GM12878 (cell line): ENCODE measurements at regions of chr16 and their contacts with region 1.

Region 1: GRCh38 chr16:48609652-48610029 is 339 bp downstream of the N4BP1 start:
- DNase-seq: no peak
- ATAC-seq: peak; percentile 46
- H3K4me3 ChIP-seq: peak overlapping the region; percentile 90
- H3K27ac ChIP-seq: peak overlapping the region; percentile 97
- H3K4me1 ChIP-seq: peaks cover 46% of the 10 kb centered on the region
- H3K27me3 ChIP-seq: no peaks in the 10 kb centered on the region
- CTCF ChIP-seq: no peak
- EP300 ChIP-seq: no peak
- POLR2A ChIP-seq: peak; percentile 75
- RAD21 ChIP-seq: no peak

Region 2: GRCh38 chr16:47475786-47476185 is 1133.9 kb before region 1 on chr16:
- CTCF ChIA-PET with region 1: no interaction called
- POLR2A ChIA-PET with region 1: interaction called, 10 read pairs
- RAD21 ChIA-PET with region 1: no interaction called
- SMC1A ChIA-PET with region 1: no interaction called
- in situ Hi-C with region 1: no loop called
- intact Hi-C with region 1: no loop called
- DNase-seq: no peak
- ATAC-seq: no peak
- H3K4me3 ChIP-seq: no peak overlapping the region
- H3K27ac ChIP-seq: no peak overlapping the region
- H3K4me1 ChIP-seq: peaks cover 10% of the 10 kb centered on the region
- H3K27me3 ChIP-seq: no peaks in the 10 kb centered on the region
- CTCF ChIP-seq: no peak
- EP300 ChIP-seq: no peak
- POLR2A ChIP-seq: no peak
- RAD21 ChIP-seq: no peak

Region 3: GRCh38 chr16:47779201-47780016 is 830.2 kb before region 1 on chr16:
- CTCF ChIA-PET with region 1: no interaction called
- POLR2A ChIA-PET with region 1: no interaction called
- RAD21 ChIA-PET with region 1: no interaction called
- SMC1A ChIA-PET with region 1: no interaction called
- in situ Hi-C with region 1: no loop called
- intact Hi-C with region 1: no loop called
- DNase-seq: peak; percentile 5
- ATAC-seq: peak; percentile 69
- H3K4me3 ChIP-seq: 0 out of 2 replicates have a peak overlapping the region, but pooled peaks have one; percentile 49
- H3K27ac ChIP-seq: peak overlapping the region; percentile 31; the same call in 1 of the 2 replicates
- H3K4me1 ChIP-seq: peaks cover 4% of the 10 kb centered on the region; the same call in 1 of the 2 replicates
- H3K27me3 ChIP-seq: no peaks in the 10 kb centered on the region
- CTCF ChIP-seq: no peak
- EP300 ChIP-seq: no peak
- POLR2A ChIP-seq: no peak
- RAD21 ChIP-seq: no peak

Region 4: DNA sequence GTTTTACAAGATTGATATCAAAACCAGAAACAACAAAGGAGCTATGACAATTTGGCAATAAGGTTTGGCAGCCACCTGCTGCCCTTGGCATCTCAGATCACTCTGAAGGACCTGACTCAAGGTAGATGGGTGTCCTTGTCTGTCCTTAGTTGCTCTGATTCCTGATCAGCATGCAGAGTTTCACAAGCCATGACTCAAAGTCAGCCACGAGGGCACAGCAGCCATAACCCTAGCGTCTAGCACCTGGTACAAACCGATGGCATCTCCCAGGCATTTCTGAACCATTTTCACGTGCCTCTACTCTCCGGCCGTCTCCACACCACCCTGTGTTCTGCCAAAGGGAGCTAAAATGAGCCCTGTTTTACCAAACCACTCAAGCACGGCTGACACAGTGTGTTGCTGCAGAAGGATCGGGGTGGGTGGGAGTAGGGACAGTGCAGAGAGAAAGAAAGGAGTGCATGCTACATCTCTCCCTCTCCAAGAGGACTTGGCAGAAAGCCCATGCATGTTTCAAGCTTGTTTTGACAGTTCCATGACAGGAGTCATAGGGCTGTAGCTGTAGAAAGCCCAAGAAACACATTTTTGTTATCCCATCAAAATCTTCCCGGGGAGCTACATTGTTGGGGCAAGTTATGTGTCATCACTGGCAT is 751.2 kb before region 1 on chr16:
- CTCF ChIA-PET with region 1: no interaction called
- POLR2A ChIA-PET with region 1: no interaction called
- RAD21 ChIA-PET with region 1: no interaction called
- SMC1A ChIA-PET with region 1: no interaction called
- in situ Hi-C with region 1: no loop called
- intact Hi-C with region 1: no loop called
- DNase-seq: no peak
- ATAC-seq: no peak
- H3K4me3 ChIP-seq: no peak overlapping the region
- H3K27ac ChIP-seq: no peak overlapping the region
- H3K4me1 ChIP-seq: no peaks in the 10 kb centered on the region
- H3K27me3 ChIP-seq: no peaks in the 10 kb centered on the region; a peak in 1 of 4 replicates
- CTCF ChIP-seq: no peak
- EP300 ChIP-seq: no peak
- POLR2A ChIP-seq: no peak
- RAD21 ChIP-seq: no peak

Region 5: GRCh38 chr16:48535831-48536613 is 73.6 kb before region 1 on chr16:
- CTCF ChIA-PET with region 1: interaction called, 3 read pairs
- POLR2A ChIA-PET with region 1: no interaction called
- RAD21 ChIA-PET with region 1: interaction called, 4 read pairs
- SMC1A ChIA-PET with region 1: interaction called, 4 read pairs
- in situ Hi-C with region 1: no loop called
- intact Hi-C with region 1: loop called (anchors 2 kb)
- DNase-seq: peak; percentile 72
- ATAC-seq: peak; percentile 85
- H3K4me3 ChIP-seq: no peak overlapping the region
- H3K27ac ChIP-seq: peak overlapping the region; percentile 73
- H3K4me1 ChIP-seq: peaks cover 24% of the 10 kb centered on the region
- H3K27me3 ChIP-seq: no peaks in the 10 kb centered on the region
- CTCF ChIP-seq: no peak
- EP300 ChIP-seq: peak; percentile 71 to 76; a peak in 3 of 4 replicates
- POLR2A ChIP-seq: no peak; the same call in 1 of the 2 replicates
- RAD21 ChIP-seq: 0 out of 2 replicates have a peak, but pooled peaks have one; percentile 7

Region 6: DNA sequence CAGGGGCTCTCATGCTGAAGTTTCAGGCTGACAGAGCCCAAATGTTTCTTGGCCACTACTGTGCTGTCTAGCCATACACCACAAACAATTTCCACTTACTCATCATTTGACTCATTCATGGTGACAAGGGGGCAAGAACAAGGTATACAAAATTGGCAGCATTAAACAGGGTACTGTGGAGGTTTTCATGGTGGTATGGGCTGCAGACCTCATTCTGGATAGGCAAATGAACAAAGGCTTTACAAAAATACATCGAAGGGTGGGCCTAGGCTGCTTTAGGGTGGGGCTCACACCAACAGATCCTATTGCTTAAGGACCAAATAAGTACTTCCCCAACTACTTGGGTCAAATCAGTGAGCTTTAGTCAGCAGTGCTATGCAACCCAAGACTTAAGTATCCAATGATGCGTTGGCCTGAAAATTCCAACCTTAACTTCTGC is 52.7 kb before region 1 on chr16:
- CTCF ChIA-PET with region 1: interaction called, 5 read pairs
- POLR2A ChIA-PET with region 1: interaction called, 7 read pairs
- RAD21 ChIA-PET with region 1: interaction called, 6 read pairs
- SMC1A ChIA-PET with region 1: interaction called, 3 read pairs
- in situ Hi-C with region 1: loop called (anchors 10 kb)
- intact Hi-C with region 1: no loop called
- DNase-seq: peak; percentile 40
- ATAC-seq: peak; percentile 92
- H3K4me3 ChIP-seq: no peak overlapping the region
- H3K27ac ChIP-seq: no peak overlapping the region
- H3K4me1 ChIP-seq: peaks cover 4% of the 10 kb centered on the region
- H3K27me3 ChIP-seq: no peaks in the 10 kb centered on the region
- CTCF ChIP-seq: no peak
- EP300 ChIP-seq: no peak
- POLR2A ChIP-seq: no peak
- RAD21 ChIP-seq: no peak

Region 7: DNA sequence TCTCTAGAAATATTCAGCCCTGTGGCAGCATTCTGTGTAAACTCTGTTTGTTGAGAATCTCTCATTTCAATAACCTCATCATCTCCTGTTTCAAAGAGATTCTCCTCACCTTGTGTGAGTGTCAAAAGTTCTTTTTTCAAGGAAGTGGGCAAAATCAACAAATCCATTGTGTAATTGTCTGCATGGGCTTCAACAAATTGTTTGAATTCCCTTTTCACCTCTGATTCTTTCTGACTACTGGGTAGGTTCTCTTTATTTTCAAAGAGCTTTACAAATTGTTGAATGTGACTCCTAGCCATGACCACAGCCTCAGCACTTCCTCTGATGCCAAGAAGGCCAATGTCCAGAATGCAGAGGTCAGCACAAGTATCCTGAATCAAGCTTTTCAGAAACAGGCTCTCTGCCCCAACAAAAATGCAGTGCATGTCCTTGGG is 47.7 kb before region 1 on chr16:
- CTCF ChIA-PET with region 1: interaction called, 5 read pairs
- POLR2A ChIA-PET with region 1: interaction called, 3 read pairs
- RAD21 ChIA-PET with region 1: interaction called, 6 read pairs
- SMC1A ChIA-PET with region 1: interaction called, 3 read pairs
- in situ Hi-C with region 1: loop called (anchors 10 kb)
- intact Hi-C with region 1: loop called (anchors 5 kb)
- DNase-seq: no peak
- ATAC-seq: no peak
- H3K4me3 ChIP-seq: no peak overlapping the region
- H3K27ac ChIP-seq: no peak overlapping the region
- H3K4me1 ChIP-seq: peaks cover 3% of the 10 kb centered on the region; the same call in 1 of the 2 replicates
- H3K27me3 ChIP-seq: no peaks in the 10 kb centered on the region
- CTCF ChIP-seq: no peak
- EP300 ChIP-seq: no peak
- POLR2A ChIP-seq: no peak
- RAD21 ChIP-seq: no peak

Region 8: DNA sequence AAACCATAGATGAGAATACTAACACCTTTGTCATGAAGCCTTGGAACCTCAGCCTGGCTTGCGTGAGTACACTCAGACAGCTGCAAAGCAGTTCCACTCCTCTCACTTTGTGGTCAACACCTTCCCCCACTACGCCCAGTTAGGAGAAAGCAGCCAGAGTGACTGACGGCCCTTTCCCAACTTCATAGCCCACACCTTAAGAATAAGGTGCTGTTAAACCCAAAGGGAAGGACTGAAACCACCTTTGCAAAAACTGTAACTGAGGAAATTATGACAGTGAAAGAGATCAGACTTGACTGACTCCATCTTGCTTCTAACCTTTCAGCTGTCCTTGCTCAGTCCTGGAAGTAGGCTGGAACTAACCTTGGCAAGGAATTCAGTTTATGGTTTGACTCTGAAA is 13.3 kb before region 1 on chr16:
- CTCF ChIA-PET with region 1: interaction called, 4 read pairs
- POLR2A ChIA-PET with region 1: interaction called, 7 read pairs
- RAD21 ChIA-PET with region 1: interaction called, 3 read pairs
- SMC1A ChIA-PET with region 1: interaction called, 21 read pairs
- in situ Hi-C with region 1: no loop called
- intact Hi-C with region 1: no loop called
- DNase-seq: no peak
- ATAC-seq: peak; percentile 91
- H3K4me3 ChIP-seq: no peak overlapping the region
- H3K27ac ChIP-seq: peak overlapping the region; percentile 17; the same call in 1 of the 2 replicates
- H3K4me1 ChIP-seq: peaks cover 22% of the 10 kb centered on the region
- H3K27me3 ChIP-seq: no peaks in the 10 kb centered on the region
- CTCF ChIP-seq: no peak
- EP300 ChIP-seq: peak; percentile 46 to 87; a peak in 2 of 4 replicates
- POLR2A ChIP-seq: no peak
- RAD21 ChIP-seq: no peak

Region 9: DNA sequence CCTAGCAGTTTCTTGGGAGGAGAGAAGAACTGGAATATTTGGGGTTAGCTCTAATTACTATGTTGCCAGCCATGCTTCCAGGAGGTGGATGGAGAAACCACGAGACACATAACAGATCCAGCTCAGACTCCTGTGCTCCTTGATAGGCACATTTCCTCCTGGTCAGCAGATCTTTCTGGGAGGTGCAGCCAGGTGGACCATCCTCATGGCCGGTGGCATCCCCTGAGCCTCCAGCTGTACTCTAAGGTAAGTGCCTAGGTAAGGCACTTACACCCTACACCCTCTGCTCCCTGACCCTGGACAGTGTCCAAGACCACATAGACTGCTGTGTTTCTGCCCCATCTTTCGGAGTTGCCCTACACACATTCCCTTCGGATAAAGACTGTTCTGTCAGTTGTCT is 27.4 kb after region 1 on chr16:
- CTCF ChIA-PET with region 1: no interaction called
- POLR2A ChIA-PET with region 1: no interaction called
- RAD21 ChIA-PET with region 1: no interaction called
- SMC1A ChIA-PET with region 1: no interaction called
- in situ Hi-C with region 1: no loop called
- intact Hi-C with region 1: no loop called
- DNase-seq: no peak
- ATAC-seq: no peak
- H3K4me3 ChIP-seq: no peak overlapping the region
- H3K27ac ChIP-seq: no peak overlapping the region
- H3K4me1 ChIP-seq: no peaks in the 10 kb centered on the region
- H3K27me3 ChIP-seq: no peaks in the 10 kb centered on the region
- CTCF ChIP-seq: no peak
- EP300 ChIP-seq: no peak
- POLR2A ChIP-seq: no peak
- RAD21 ChIP-seq: no peak

Region 10: DNA sequence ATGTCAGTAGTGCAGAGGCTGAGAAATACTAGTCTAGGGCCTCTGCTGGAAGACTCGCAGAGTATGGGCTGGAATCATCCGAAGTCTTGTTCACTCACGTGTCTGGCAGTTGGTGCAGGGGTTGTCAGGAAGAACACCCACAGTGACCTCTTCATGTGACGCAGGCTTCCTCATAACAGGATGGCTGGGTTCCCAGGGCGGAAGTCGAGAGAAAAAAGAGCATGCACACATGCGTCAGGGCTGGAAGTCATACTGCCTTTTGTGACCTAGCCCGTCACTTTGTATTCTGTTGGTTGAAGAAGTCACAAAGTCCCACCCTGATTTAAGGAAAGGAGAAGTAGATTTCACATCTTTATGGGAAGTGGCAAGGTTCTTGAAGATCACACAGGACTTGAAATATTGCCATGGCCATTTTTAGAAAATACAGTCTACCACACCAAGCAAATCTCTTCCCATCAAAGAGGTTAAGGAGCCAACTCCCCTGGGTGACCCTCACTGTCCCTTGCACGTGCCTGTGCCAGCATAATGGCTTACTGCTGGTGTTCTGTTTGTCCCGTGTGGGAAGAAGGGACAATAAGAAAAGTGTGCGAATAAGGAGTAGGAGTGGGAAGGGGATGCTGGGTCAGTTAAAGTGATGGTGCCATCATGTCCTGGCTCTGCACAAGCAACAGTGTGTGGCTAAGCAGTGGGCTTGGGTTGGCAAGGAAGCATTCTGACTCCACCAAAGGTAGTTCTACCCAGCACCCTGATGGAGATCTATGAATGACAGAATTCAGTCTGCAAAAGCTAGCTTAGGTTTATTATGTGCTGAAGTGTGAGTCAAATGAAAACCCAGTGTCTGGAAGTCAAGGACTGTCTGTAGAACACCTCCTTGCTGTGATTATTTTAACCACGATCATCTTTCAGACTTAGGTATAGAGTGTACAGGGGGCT is 1484.2 kb after region 1 on chr16:
- CTCF ChIA-PET with region 1: no interaction called
- POLR2A ChIA-PET with region 1: no interaction called
- RAD21 ChIA-PET with region 1: no interaction called
- SMC1A ChIA-PET with region 1: no interaction called
- in situ Hi-C with region 1: no loop called
- intact Hi-C with region 1: no loop called
- DNase-seq: no peak
- ATAC-seq: peak; percentile 47
- H3K4me3 ChIP-seq: no peak overlapping the region
- H3K27ac ChIP-seq: no peak overlapping the region
- H3K4me1 ChIP-seq: peaks cover 3% of the 10 kb centered on the region; the same call in 1 of the 2 replicates
- H3K27me3 ChIP-seq: no peaks in the 10 kb centered on the region
- CTCF ChIP-seq: no peak
- EP300 ChIP-seq: no peak
- POLR2A ChIP-seq: no peak
- RAD21 ChIP-seq: no peak